PC-9 (cell line): ENCODE measurements at regions of chr1 and their contacts with region 1.

Region 1: GRCh38 chr1:23149114-23149513 is 19.5 kb downstream of the LUZP1 start:
- DNase-seq: no peak
- H3K4me3 ChIP-seq: no peak overlapping the region
- H3K27ac ChIP-seq: no peak overlapping the region
- H3K4me1 ChIP-seq: no peaks in the 10 kb centered on the region
- H3K27me3 ChIP-seq: no peaks in the 10 kb centered on the region
- CTCF ChIP-seq: no peak

Region 2: GRCh38 chr1:23184212-23184934 is 35.3 kb after region 1 on chr1:
- CTCF ChIA-PET with region 1: interaction called, 8 read pairs
- POLR2A ChIA-PET with region 1: interaction called, 13 read pairs
- intact Hi-C with region 1: no loop called
- DNase-seq: no peak
- H3K4me3 ChIP-seq: no peak overlapping the region
- H3K27ac ChIP-seq: no peak overlapping the region
- H3K4me1 ChIP-seq: peaks cover 20% of the 10 kb centered on the region
- H3K27me3 ChIP-seq: no peaks in the 10 kb centered on the region
- CTCF ChIP-seq: peak; percentile 91